B cell (primary cell): ENCODE measurements at regions of chr6 and their contacts with region 1.

Region 1: GRCh38 chr6:52361945-52362442 is at the start of gene PAQR8:
- DNase-seq: peak; percentile 88
- ATAC-seq: peak; percentile 90
- H3K4me3 ChIP-seq: peak within 1 kb of the TSS; percentile 54 to 100 (median 91)
- H3K4me3 Mint-ChIP-seq: peak within 1 kb of the TSS; percentile 96
- H3K27ac ChIP-seq: peak within 1 kb of the TSS; percentile 76 to 86
- H3K27ac Mint-ChIP-seq: peak within 1 kb of the TSS; percentile 92
- H3K4me1 ChIP-seq: peaks cover 14 to 17% of the 10 kb centered on the region in 2 donors
- H3K4me1 Mint-ChIP-seq: peaks cover 24% of the 10 kb centered on the region
- H3K27me3 ChIP-seq: no peaks in the 10 kb centered on the region
- H3K27me3 Mint-ChIP-seq: no peaks in the 10 kb centered on the region
- CTCF ChIP-seq: peak; percentile 5
- total RNA-seq, gene PAQR8: 8.5 and 8.9 TPM in 2 replicates

Region 2: DNA sequence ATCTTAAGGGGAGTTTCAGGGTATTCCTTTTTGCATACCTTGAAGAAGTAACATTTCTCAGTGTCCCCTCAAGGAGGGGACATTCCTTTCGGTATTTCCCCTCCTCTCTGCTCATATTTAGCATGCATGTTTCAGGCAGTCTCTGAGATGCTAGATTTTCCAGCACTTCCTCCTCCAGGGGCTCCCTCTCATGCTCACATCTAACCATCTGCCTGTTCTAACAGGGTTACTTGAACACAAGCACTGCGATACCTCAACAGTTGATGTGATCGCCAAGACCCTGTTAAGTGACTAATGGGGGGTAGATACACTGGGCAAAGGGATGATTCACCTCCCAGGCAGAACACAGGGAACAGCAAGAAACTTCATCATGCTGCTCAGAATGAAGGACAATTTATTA is 64.6 kb before region 1 on chr6:
- CTCF ChIA-PET with region 1: no interaction called
- POLR2A ChIA-PET with region 1: no interaction called
- intact Hi-C with region 1: loop called (anchors 2 kb)
- DNase-seq: peak; percentile 60
- ATAC-seq: peak; percentile 41
- H3K4me3 ChIP-seq: peak overlapping the region in 2 of 5 experiments; percentile 7 to 56
- H3K4me3 Mint-ChIP-seq: peak overlapping the region; percentile 73
- H3K27ac ChIP-seq: peak overlapping the region in 1 of 2 donors; percentile 13
- H3K27ac Mint-ChIP-seq: peak overlapping the region; percentile 95
- H3K4me1 ChIP-seq: peaks cover 21 to 33% of the 10 kb centered on the region in 2 donors
- H3K4me1 Mint-ChIP-seq: peaks cover 29% of the 10 kb centered on the region
- H3K27me3 ChIP-seq: no peaks in the 10 kb centered on the region
- H3K27me3 Mint-ChIP-seq: no peaks in the 10 kb centered on the region
- CTCF ChIP-seq: no peak

Region 3: GRCh38 chr6:52497652-52498408 is 135.8 kb after region 1 on chr6:
- CTCF ChIA-PET with region 1: no interaction called
- POLR2A ChIA-PET with region 1: no interaction called
- intact Hi-C with region 1: loop called (anchors 5 kb)
- DNase-seq: peak; percentile 89
- ATAC-seq: peak; percentile 79
- H3K4me3 ChIP-seq: peak overlapping the region in 3 of 5 experiments; percentile 3 to 19 (median 7)
- H3K4me3 Mint-ChIP-seq: peak overlapping the region; percentile 76
- H3K27ac ChIP-seq: peak overlapping the region; percentile 96 to 99
- H3K27ac Mint-ChIP-seq: peak overlapping the region; percentile 96
- H3K4me1 ChIP-seq: peaks cover 43 to 61% of the 10 kb centered on the region in 2 donors
- H3K4me1 Mint-ChIP-seq: peaks cover 66% of the 10 kb centered on the region
- H3K27me3 ChIP-seq: no peaks in the 10 kb centered on the region
- H3K27me3 Mint-ChIP-seq: no peaks in the 10 kb centered on the region
- CTCF ChIP-seq: no peak

Region 4: DNA sequence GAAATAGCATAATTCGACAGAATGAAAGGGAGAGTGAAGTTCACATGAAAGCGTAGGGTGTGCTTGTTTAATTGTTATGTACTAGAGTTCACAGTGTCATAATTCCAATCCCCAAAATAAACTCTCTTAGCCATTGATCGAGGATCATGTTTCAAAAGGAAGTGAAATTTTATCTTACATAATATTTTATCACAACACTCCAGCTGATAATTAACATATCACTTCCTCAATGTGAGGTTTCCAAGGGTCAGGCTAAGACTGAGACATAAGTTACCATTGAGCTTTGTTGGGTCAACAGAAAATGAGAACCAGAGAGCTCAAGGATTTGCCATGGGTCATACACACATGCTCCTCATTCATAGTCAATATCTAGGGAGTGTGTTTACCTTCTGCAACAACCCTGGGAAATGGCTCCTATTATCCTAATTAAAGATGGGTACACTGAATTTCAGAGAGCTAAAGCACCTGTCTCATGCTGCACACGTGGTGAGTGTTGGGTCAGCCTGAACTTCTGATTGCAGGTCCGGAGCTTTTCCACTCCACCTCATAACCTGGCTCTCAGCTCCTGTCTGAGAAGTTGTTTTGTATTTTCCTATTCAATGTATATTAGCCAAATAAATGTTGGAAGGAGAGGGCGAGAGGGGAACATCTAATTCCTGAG is 398.2 kb after region 1 on chr6:
- CTCF ChIA-PET with region 1: no interaction called
- POLR2A ChIA-PET with region 1: no interaction called
- intact Hi-C with region 1: no loop called
- DNase-seq: no peak
- ATAC-seq: no peak
- H3K4me3 ChIP-seq: no peak overlapping the region
- H3K4me3 Mint-ChIP-seq: no peak overlapping the region
- H3K27ac ChIP-seq: no peak overlapping the region
- H3K27ac Mint-ChIP-seq: no peak overlapping the region
- H3K4me1 ChIP-seq: no peaks in the 10 kb centered on the region
- H3K4me1 Mint-ChIP-seq: no peaks in the 10 kb centered on the region
- H3K27me3 ChIP-seq: no peaks in the 10 kb centered on the region
- H3K27me3 Mint-ChIP-seq: peaks cover 26% of the 10 kb centered on the region
- CTCF ChIP-seq: no peak